ENCODE measurements at regions of chr4 and their contacts with region 1.

Region 1: GRCh38 chr4:37928426-37929416 is 31.5 kb upstream of the PTTG2 start:
- DNase-seq: peak; percentile 59
- H3K4me3 ChIP-seq: no peak overlapping the region
- H3K27ac ChIP-seq: no peak overlapping the region
- H3K4me1 ChIP-seq: no peaks in the 10 kb centered on the region
- H3K27me3 ChIP-seq: no peaks in the 10 kb centered on the region
- CTCF ChIP-seq: no peak

Region 2: GRCh38 chr4:36213977-36214376 is 1714.7 kb before region 1 on chr4:
- CTCF ChIA-PET with region 1: no interaction called
- POLR2A ChIA-PET with region 1: interaction called, 18 read pairs
- intact Hi-C with region 1: no loop called
- DNase-seq: no peak
- H3K4me3 ChIP-seq: no peak overlapping the region
- H3K27ac ChIP-seq: no peak overlapping the region
- H3K4me1 ChIP-seq: no peaks in the 10 kb centered on the region
- H3K27me3 ChIP-seq: no peaks in the 10 kb centered on the region
- CTCF ChIP-seq: no peak

Region 3: GRCh38 chr4:37953620-37954293 is 25.0 kb after region 1 on chr4:
- CTCF ChIA-PET with region 1: no interaction called
- POLR2A ChIA-PET with region 1: no interaction called
- intact Hi-C with region 1: no loop called
- DNase-seq: peak; percentile 20
- H3K4me3 ChIP-seq: no peak overlapping the region
- H3K27ac ChIP-seq: no peak overlapping the region
- H3K4me1 ChIP-seq: no peaks in the 10 kb centered on the region
- H3K27me3 ChIP-seq: no peaks in the 10 kb centered on the region
- CTCF ChIP-seq: no peak

Measured in A673 (cell line).